ENCODE measurements at regions of chr6 and their contacts with region 1.

Region 1: DNA sequence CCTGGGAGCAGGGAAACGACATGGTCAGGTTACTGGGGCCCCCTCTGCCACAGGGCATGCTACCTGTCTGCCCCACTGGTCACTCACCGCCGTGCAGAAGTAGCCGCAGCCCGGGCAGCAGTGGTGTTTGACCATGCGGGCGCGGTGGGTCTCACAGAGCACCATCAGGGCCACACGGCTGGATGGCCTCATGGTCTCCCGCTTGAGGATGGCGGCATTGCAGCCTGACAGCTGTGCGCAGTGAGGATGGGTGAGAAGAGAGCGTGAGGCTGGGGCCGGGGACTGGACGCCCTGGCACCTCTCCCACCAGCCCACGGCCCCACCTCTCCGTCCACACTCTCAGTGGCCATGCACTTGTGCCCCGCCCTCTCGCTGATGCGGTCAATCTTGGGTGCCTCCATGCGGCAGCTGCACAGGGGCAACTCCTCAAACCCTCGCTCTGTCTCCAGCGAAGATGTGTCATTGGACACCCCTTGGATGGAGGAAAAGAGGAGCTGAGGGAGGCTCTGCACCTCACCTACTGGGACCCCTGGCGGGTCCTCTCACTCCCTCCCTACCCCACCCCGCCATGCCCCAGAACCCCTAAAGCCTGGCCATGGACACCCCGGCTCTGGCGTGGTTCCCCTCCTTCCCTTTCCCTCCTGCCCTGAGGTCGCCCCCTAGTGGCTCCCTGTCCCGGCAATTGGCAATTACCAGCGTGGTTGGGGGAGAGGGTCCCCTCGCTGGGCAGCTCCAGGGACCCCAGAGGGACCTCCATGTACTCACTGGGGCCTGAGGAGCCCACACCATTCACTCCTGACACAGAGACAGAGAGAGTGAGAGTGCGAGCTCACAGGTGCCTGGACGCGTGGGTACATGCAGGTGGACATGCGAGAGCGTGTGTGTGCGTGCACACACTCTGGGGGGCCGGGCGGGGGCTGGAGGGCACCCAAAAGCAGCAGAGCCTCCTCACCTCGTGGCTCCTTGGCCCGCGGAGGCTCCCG is 8.9 kb downstream of the EHMT2 start:
- DNase-seq: peak; percentile 71
- ATAC-seq: peak; percentile 64
- H3K4me3 Mint-ChIP-seq: no peak overlapping the region
- H3K27ac Mint-ChIP-seq: no peak overlapping the region
- H3K4me1 Mint-ChIP-seq: peaks cover 5% of the 10 kb centered on the region
- H3K27me3 Mint-ChIP-seq: no peaks in the 10 kb centered on the region
- CTCF ChIP-seq: peak; percentile 93

Region 2: DNA sequence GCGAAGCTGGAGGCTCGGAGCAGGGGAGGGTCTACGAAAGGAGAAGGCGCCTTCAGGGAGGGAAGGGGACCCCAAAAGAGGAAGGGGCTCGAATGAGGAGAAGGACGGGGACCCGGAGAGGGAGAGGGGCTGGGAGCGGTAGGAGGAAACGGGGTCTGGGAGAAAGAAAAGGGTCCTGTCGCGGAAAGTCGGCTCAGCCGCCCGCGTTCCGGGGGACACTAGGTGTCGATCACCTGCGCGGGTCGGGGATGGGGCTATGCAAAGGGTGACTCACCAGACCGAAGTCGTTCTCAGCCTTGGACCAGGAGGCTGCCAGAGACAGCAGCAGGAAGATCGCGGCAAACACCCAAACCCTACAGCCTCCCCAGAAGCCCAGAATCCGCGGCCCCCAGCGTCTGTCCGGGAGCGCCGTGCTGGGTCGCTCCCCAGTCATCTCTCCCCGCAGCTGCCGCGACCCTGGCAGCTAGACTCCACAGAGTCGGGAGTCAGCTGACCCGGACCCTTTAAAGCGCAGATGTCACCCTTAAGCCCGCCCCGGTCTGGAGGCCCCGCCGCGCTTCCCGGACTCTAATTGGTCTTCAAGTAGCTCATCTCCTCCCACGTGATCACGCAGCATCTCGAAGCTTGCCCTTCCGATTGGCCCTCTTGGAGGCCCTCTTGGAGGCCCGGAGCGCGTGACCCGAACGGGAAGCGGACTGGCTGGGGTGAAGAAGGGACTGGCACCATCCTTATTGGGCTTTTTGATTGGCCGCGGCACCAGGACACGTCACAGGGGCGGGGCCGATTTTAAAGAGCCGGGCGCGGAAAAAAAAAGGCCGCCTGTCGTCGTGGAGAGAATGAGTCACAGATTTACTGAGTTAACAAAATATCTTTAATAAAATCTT is 26.0 kb before region 1 on chr6 and contains the start of gene NEU1:
- CTCF ChIA-PET with region 1: interaction called, 14 read pairs
- POLR2A ChIA-PET with region 1: no interaction called
- intact Hi-C with region 1: no loop called
- DNase-seq: peak; percentile 100
- ATAC-seq: peak; percentile 96
- H3K4me3 Mint-ChIP-seq: peak within 1 kb of the TSS; percentile 84
- H3K27ac Mint-ChIP-seq: peak within 1 kb of the TSS; percentile 90
- H3K4me1 Mint-ChIP-seq: peaks cover 20% of the 10 kb centered on the region
- H3K27me3 Mint-ChIP-seq: no peaks in the 10 kb centered on the region
- CTCF ChIP-seq: no peak
- total RNA-seq, gene NEU1: 8.7 to 9.8 TPM

Region 3: GRCh38 chr6:32234934-32235333 is 346.4 kb after region 1 on chr6:
- CTCF ChIA-PET with region 1: no interaction called
- POLR2A ChIA-PET with region 1: no interaction called
- intact Hi-C with region 1: no loop called
- DNase-seq: peak; percentile 26
- ATAC-seq: peak; percentile 61
- H3K4me3 Mint-ChIP-seq: no peak overlapping the region
- H3K27ac Mint-ChIP-seq: no peak overlapping the region
- H3K4me1 Mint-ChIP-seq: no peaks in the 10 kb centered on the region
- H3K27me3 Mint-ChIP-seq: no peaks in the 10 kb centered on the region
- CTCF ChIP-seq: no peak

Measured in activated CD8-positive, alpha-beta T cell treated with anti-CD3 and anti-CD28 coated beads for 36 hours (primary cell).